ENCODE measurements at regions of chr19 and their contacts with region 1.

Region 1: GRCh38 chr19:36850559-36851442 is at the start of gene ZNF345:
- DNase-seq: peak; percentile 77 to 96
- H3K4me3 ChIP-seq: peak within 1 kb of the TSS; percentile 78 to 84
- H3K27ac ChIP-seq: peak within 1 kb of the TSS; percentile 83 to 88
- H3K4me1 ChIP-seq: peaks cover 0 to 5% of the 10 kb centered on the region in 2 donors
- H3K27me3 ChIP-seq: no peaks in the 10 kb centered on the region
- CTCF ChIP-seq: no peak
- total RNA-seq, gene ZNF345: 8.0 TPM

Region 2: GRCh38 chr19:36665832-36666231 is 185.0 kb before region 1 on chr19:
- intact Hi-C with region 1: loop called (anchors 5 kb)
- DNase-seq: no peak
- H3K4me3 ChIP-seq: peak overlapping the region; percentile 74 to 92
- H3K27ac ChIP-seq: no peak overlapping the region
- H3K4me1 ChIP-seq: peaks cover 0 to 3% of the 10 kb centered on the region in 2 donors
- H3K27me3 ChIP-seq: no peaks in the 10 kb centered on the region
- CTCF ChIP-seq: no peak

Region 3: DNA sequence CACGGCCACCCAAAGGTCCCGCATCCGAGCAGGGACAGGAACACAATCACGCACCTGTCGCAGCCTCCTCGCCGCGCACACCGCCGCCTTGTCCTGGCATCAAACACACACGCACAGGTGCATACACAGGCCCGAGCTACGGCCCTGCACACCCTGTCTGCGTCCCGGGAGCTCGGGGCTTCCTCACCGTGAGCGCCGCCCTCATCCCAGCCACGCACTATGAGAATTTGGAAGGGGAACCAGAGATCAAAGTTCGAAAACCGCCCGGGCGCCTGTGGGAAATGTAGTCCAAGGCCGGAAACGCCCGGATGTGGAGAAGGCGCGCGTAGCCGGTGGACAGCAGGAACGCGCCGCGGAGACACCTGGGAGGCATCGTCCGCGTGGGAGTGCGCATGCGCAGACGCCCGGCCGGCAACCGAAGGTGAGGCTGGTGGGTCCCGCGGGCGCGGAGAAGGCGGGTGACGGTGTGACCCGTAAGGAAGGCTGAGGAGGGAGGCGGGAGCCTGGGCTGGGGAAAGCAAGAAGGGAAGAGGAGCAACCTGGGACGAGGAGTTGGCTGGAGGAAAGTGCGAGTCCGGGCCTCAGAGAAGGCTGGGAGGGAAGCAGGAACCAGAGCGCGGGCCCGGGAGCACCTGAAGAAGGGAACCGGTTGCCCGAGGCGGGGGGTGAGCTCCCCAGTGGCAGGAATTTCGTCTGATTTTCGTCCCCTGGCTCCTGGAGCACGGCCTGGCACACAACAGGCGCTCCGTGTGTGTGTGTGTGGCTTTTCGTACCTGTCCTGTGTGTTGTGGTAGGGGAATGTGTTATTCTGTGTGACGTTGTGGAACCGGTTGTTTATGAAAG is 163.4 kb before region 1 on chr19 and contains the start of gene ZNF567:
- intact Hi-C with region 1: loop called (anchors 2 kb)
- DNase-seq: peak; percentile 88 to 98
- H3K4me3 ChIP-seq: peak within 1 kb of the TSS; percentile 68 to 75
- H3K27ac ChIP-seq: peak within 1 kb of the TSS; percentile 39 to 66
- H3K4me1 ChIP-seq: peaks cover 0 to 6% of the 10 kb centered on the region in 2 donors
- H3K27me3 ChIP-seq: no peaks in the 10 kb centered on the region
- CTCF ChIP-seq: no peak
- total RNA-seq, gene ZNF567: 3.7 TPM

Region 4: GRCh38 chr19:36837906-36838783 is 12.7 kb before region 1 on chr19 and contains the start of gene ZNF790:
- intact Hi-C with region 1: loop called (anchors 1 kb)
- DNase-seq: peak; percentile 62 to 94
- H3K4me3 ChIP-seq: peak within 1 kb of the TSS; percentile 66 to 67
- H3K27ac ChIP-seq: peak within 1 kb of the TSS; percentile 72 to 75
- H3K4me1 ChIP-seq: peaks cover 0 to 7% of the 10 kb centered on the region in 2 donors
- H3K27me3 ChIP-seq: no peaks in the 10 kb centered on the region
- CTCF ChIP-seq: no peak
- total RNA-seq, gene ZNF790: 17.0 TPM

Region 5: DNA sequence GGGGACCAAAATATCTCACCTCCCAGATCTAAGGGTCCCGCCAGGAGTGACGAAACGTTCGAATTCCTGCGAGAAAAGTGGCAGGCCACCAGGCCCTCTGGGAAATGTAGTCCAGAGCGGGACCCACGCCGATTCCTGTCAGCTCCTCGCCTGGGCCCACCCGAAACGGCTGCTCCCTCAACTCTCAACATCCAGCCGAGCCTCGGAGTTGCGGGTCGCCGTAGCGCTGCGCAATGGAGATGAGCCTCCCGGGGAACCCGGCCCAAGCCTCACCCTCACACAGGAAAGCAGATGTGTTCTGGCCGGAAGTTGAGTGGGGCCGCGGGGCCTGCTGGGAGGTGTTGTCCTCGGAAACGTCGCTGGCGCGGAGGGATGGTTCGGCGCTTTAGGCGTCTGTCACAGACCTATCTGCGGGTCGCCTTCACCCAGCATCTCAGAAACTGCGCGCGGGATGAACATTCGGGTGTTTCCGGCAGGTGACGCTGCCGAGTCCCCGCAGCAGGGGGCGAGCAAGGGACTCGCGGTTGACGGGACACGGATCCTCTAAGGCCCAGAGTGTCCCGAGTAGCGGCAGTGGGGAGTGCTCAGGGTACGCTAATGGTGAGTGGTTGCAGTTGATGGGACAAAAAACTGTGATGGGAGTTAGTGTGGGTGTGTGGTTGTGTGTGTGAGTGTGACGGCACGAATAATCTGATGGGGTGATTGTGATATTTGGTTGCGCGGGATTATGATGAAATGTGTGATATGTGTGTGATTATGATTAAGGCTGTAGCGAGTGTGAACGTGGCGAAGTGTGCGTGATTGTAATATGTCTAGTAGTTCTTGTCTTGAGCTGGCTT is 65.4 kb after region 1 on chr19 and contains the starts of genes ZNF568 and ZNF829:
- intact Hi-C with region 1: loop called (anchors 1 kb)
- DNase-seq: peak; percentile 42 to 93
- H3K4me3 ChIP-seq: peak within 1 kb of the TSS; percentile 80 to 91
- H3K27ac ChIP-seq: peak within 1 kb of the TSS; percentile 93 to 98
- H3K4me1 ChIP-seq: peaks cover 0 to 10% of the 10 kb centered on the region in 2 donors
- H3K27me3 ChIP-seq: no peaks in the 10 kb centered on the region
- CTCF ChIP-seq: peak; percentile 57 to 73 (median 59)
- total RNA-seq, gene ZNF568: 2.4 TPM
- total RNA-seq, gene ZNF829: 1.2 TPM

Region 6: DNA sequence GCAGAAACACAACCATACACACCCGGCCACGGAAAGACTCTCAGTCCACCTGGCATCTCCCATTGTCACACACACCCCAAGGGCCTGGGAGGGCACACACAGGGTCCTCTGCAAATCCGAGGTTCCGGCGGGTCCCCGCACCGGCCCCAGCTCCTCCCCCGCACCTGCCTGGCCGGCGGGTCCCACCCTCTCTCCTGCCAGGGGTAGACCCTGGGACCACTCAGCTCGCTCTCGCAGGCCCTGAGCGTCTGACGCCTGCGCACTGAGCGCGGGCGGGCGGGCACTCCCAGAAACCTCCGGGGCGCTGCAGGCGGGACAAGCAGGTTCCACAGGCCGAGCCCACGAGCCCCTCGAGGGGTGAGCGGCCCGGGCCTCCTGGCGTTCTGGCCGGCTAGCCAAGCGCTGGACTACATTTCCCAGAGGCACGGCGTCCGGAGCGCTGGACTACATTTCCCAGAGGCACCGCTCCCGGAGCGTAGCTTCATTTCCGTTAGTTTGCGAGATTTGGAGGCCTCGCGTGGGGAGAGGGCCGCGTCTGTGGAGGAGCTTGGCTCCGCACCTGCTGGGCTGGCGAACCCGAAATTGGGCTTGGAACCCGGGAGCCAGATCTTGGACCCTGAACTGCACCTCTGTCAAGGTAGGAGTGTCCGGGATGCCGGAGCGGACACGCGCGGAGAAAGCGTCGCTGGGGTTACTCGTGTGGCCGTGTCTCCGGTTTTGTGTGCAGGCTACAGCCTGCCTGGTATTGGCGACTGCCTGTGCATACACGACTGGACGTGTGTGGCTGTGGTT is 227.3 kb after region 1 on chr19 and contains the start of gene ZNF420:
- intact Hi-C with region 1: loop called (anchors 5 kb)
- DNase-seq: peak; percentile 77 to 96
- H3K4me3 ChIP-seq: peak within 1 kb of the TSS; percentile 84 to 87
- H3K27ac ChIP-seq: peak within 1 kb of the TSS; percentile 87 to 91
- H3K4me1 ChIP-seq: peaks cover 6 to 7% of the 10 kb centered on the region in 2 donors
- H3K27me3 ChIP-seq: no peaks in the 10 kb centered on the region
- CTCF ChIP-seq: no peak
- total RNA-seq, gene ZNF420: 69.9 TPM

Region 7: DNA sequence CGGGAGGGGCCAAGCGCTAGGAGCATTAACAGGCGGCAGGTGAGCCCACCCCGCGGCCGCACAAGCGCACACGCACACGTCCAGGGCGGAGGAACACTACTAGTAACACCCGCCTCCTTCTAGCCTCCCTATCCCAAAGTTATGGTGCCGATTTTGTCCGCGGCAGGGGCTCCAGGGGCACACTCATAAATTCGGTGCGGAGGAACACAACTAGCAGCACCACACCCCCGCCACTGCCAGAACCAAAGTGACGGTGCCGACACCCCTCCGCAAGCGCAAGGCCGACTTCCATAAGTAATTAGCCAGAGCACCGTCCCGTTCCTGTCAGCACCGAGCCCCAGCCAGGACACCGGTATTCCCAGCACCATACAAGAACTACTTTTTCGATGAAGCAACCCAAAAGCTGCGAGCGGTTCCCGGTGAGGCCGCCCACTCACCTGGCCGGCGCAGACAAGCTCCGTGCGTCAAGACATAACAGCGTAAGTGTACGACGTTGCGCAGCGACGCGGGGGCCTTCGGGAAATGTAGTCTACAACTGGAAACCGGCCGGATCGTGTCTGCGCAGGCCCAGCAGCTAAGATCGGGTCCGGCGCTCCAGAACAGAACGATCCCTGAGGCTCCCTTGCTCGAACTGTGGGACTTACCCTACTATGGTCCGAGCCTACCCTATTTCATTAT is 743.6 kb after region 1 on chr19 and contains the starts of genes ZNF540 and ZNF571:
- intact Hi-C with region 1: loop called (anchors 1 kb)
- DNase-seq: peak; percentile 81 to 96
- H3K4me3 ChIP-seq: peak within 1 kb of the TSS; percentile 71 to 82
- H3K27ac ChIP-seq: peak within 1 kb of the TSS; percentile 82 to 92
- H3K4me1 ChIP-seq: peaks cover 0 to 3% of the 10 kb centered on the region in 2 donors
- H3K27me3 ChIP-seq: no peaks in the 10 kb centered on the region
- CTCF ChIP-seq: no peak
- total RNA-seq, gene ZNF540: not detected
- total RNA-seq, gene ZNF571: 0.11 TPM

Measured in ascending aorta (tissue), 2 donors.